ENCODE measurements at regions of chr11 and their contacts with region 1.

Region 1: GRCh38 chr11:67420646-67421420 is 5.4 kb downstream of the CARNS1 start:
- DNase-seq: peak; percentile 95
- H3K4me3 Mint-ChIP-seq: peak overlapping the region; percentile 72
- H3K27ac Mint-ChIP-seq: peak overlapping the region; percentile 70
- H3K4me1 Mint-ChIP-seq: peaks cover 30% of the 10 kb centered on the region
- H3K27me3 Mint-ChIP-seq: peaks cover 11% of the 10 kb centered on the region

Region 2: GRCh38 chr11:67409261-67409666 is 11.6 kb before region 1 on chr11:
- intact Hi-C with region 1: loop called (anchors 1 kb)
- DNase-seq: peak; percentile 78
- H3K4me3 Mint-ChIP-seq: peak overlapping the region; percentile 88
- H3K27ac Mint-ChIP-seq: peak overlapping the region; percentile 94
- H3K4me1 Mint-ChIP-seq: peaks cover 75% of the 10 kb centered on the region
- H3K27me3 Mint-ChIP-seq: peaks cover 2% of the 10 kb centered on the region

Region 3: GRCh38 chr11:67439321-67439883 is 18.6 kb after region 1 on chr11:
- intact Hi-C with region 1: loop called (anchors 2 kb)
- DNase-seq: peak; percentile 24
- H3K4me3 Mint-ChIP-seq: peak overlapping the region; percentile 90
- H3K27ac Mint-ChIP-seq: peak overlapping the region; percentile 97
- H3K4me1 Mint-ChIP-seq: peaks cover 33% of the 10 kb centered on the region
- H3K27me3 Mint-ChIP-seq: no peaks in the 10 kb centered on the region